AG04450 (cell line): ENCODE measurements at regions of chr19 and their contacts with region 1.

Region 1: DNA sequence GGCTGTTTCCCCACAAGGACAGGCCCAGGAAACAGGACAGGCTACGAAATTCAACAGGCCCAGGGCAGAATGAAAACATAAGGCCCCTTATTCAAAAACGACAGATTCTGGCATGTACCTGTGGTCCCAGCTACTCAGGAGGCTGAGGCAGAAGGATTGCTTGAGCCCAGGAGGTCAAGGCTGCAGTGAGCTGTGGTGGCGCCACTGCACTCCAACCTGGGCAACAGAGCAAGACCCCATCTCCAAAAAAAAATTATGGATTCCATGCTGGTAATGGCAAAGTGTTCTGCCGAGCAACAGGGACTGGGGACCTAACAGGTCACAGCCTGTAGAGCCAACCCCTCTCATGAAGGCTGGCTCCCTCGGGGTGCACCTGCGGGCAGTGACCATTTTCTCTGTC is 52.6 kb upstream of the USE1 start:
- DNase-seq: no peak
- H3K4me3 ChIP-seq: no peak overlapping the region
- H3K27ac ChIP-seq: no peak overlapping the region
- H3K27me3 ChIP-seq: no peaks in the 10 kb centered on the region
- CTCF ChIP-seq: no peak

Region 2: GRCh38 chr19:17075035-17075863 is 87.3 kb before region 1 on chr19 and contains the starts of genes HAUS8 and MYO9B:
- CTCF ChIA-PET with region 1: no interaction called
- POLR2A ChIA-PET with region 1: interaction called, 11 read pairs
- DNase-seq: peak; percentile 99
- H3K4me3 ChIP-seq: peak within 1 kb of the TSS; percentile 92
- H3K27ac ChIP-seq: peak within 1 kb of the TSS; percentile 62
- H3K27me3 ChIP-seq: no peaks in the 10 kb centered on the region
- CTCF ChIP-seq: no peak
- polyA plus RNA-seq, gene HAUS8: 4.6 and 4.9 TPM in 2 replicates
- polyA plus RNA-seq, gene MYO9B: 34.5 and 42.5 TPM in 2 replicates

Region 3: DNA sequence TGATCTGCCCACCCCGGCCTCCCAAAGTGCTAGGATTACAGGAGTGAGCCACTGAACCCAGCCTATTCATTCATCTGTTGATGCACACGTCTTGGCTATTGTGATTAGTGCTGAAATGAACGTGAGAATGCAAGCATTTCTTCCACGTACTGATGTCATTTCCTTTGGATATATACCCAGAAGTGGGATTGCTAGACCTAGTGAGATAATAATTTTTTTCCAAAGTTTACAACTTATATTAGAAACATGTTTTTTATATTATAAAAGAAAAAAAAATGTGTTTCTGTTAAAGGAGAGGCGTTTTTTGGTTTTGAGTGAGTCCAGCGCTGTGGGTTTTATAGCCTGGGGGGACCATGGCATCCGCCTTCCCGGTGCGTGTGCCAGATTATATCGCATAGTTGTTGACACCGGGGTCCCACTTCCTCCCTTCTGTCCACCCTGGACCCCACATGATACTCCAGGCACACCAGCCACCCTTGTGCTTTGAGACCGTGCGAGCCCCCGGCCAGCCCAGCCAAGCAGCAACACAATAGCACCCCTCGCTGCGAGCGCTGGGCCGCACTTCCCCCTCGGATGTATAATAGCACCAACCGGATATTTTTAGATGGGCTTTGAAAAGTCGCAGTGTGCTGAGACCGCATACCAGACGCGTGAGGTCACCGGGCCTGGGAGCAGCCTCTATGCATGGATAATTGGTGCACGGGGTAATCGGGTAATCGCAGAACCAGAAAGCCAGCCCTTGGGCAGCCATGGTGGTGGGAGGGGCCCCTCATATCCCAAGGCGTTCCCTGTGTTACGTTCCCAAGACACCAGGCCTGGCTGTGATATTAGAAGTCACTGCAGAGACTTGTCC is 27.4 kb before region 1 on chr19:
- CTCF ChIA-PET with region 1: interaction called, 14 read pairs
- POLR2A ChIA-PET with region 1: no interaction called
- DNase-seq: peak; percentile 89
- H3K4me3 ChIP-seq: peak overlapping the region; percentile 48
- H3K27ac ChIP-seq: peak overlapping the region; percentile 98
- H3K27me3 ChIP-seq: no peaks in the 10 kb centered on the region
- CTCF ChIP-seq: peak; percentile 39